H1 (cell line): ENCODE measurements at regions of chr2 and their contacts with region 1.

Region 1: DNA sequence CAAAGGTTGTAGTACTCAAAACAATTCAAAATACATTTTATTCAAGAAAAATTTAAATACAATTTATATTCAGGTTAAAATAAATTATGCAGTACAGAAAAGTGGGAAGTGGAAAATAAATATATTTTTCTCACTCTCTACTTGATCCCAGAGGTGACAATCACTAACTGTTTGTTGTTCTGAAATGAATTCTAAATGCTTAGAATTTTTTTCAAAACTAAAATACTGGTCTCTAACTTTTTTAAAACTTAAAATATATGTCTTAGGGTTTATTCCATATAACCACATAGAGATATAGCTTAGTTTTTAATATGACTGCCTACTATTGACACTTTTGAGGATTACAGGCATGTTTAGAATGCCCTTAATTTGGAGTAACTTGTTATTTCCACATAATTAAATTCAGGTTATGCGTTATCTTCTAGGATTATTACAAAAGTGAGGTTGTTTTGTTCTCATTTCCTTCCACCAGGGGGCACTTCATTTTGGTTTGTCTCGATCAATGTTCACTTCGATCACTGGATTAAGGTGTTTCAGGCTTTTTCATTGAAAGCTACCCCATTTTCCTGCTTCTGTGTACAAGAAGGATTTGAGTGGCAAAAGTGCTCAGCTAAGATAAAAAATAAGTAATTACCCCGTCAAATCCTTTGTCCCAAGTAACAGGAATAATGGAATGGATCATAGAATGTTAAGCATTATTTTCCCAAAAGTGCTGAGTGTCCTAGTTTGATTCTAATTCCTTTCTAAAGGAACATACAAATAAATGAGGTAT is 27.1 kb upstream of the TFPI start:
- DNase-seq: no peak
- H3K4me3 ChIP-seq: no peak overlapping the region
- H3K27ac ChIP-seq: no peak overlapping the region
- H3K4me1 ChIP-seq: no peaks in the 10 kb centered on the region
- H3K27me3 ChIP-seq: no peaks in the 10 kb centered on the region
- CTCF ChIP-seq: peak in 2 of 3 experiments; percentile 54 to 64; a peak in 2 of 4 replicates
- EP300 ChIP-seq: no peak
- POLR2A ChIP-seq: no peak
- RAD21 ChIP-seq: peak; percentile 61 to 70

Region 2: DNA sequence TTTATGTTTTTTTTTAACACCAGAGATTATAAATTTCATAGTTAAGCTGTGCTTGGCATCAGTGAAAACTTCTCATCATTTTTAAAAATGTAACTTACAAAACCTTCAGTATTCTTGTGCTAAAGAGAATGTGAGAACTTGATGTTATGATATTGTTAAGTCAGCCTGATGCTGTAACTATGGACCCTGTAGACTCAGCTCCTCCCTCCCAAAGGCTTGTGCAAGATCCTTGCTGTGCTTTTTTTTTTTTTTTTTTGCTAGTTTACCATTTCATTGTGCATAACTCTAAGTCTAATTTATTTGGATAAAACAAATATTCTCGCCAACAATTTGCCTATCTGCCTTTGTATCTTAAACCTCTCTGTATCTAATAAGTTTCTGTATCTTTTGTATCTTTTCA is 14.2 kb before region 1 on chr2:
- CTCF ChIA-PET with region 1: interaction called, 36 read pairs
- POLR2A ChIA-PET with region 1: no interaction called
- DNase-seq: no peak
- H3K4me3 ChIP-seq: no peak overlapping the region
- H3K27ac ChIP-seq: no peak overlapping the region
- H3K4me1 ChIP-seq: peaks cover 0 to 7% (median 0%) of the 10 kb centered on the region in 4 experiments; a peak in 2 of 7 replicates
- H3K27me3 ChIP-seq: no peaks in the 10 kb centered on the region
- CTCF ChIP-seq: no peak
- EP300 ChIP-seq: no peak
- POLR2A ChIP-seq: no peak
- RAD21 ChIP-seq: no peak

Region 3: DNA sequence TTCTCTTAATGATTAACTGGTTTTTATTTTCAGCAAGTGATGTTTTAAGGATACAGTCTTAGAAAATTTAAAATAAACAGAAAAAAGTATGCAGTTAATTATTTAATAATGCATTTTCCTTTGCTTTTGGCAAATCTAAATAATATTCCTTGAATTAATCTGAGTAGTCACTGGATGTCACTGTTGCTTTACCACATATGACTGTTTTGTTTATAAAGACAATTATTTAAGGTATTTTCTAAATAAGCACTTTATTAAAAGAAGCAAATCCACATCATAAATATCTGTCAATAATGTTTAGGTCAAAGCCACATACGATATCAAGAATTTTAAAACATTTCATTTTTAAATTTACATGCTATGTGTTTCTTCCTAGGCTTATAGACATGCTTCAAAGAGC is 13.5 kb after region 1 on chr2:
- CTCF ChIA-PET with region 1: interaction called, 26 read pairs
- POLR2A ChIA-PET with region 1: interaction called, 4 read pairs
- DNase-seq: no peak
- H3K4me3 ChIP-seq: no peak overlapping the region
- H3K27ac ChIP-seq: no peak overlapping the region
- H3K4me1 ChIP-seq: no peaks in the 10 kb centered on the region
- H3K27me3 ChIP-seq: no peaks in the 10 kb centered on the region
- CTCF ChIP-seq: no peak
- EP300 ChIP-seq: no peak
- POLR2A ChIP-seq: no peak
- RAD21 ChIP-seq: peak in 1 of 2 experiments; percentile 31; a peak in 3 of 4 replicates

Region 4: GRCh38 chr2:187644981-187645380 is 63.7 kb after region 1 on chr2:
- CTCF ChIA-PET with region 1: no interaction called
- POLR2A ChIA-PET with region 1: no interaction called
- DNase-seq: no peak
- H3K4me3 ChIP-seq: no peak overlapping the region
- H3K27ac ChIP-seq: no peak overlapping the region
- H3K4me1 ChIP-seq: no peaks in the 10 kb centered on the region
- H3K27me3 ChIP-seq: no peaks in the 10 kb centered on the region
- CTCF ChIP-seq: no peak
- EP300 ChIP-seq: no peak
- POLR2A ChIP-seq: no peak
- RAD21 ChIP-seq: no peak

Region 5: DNA sequence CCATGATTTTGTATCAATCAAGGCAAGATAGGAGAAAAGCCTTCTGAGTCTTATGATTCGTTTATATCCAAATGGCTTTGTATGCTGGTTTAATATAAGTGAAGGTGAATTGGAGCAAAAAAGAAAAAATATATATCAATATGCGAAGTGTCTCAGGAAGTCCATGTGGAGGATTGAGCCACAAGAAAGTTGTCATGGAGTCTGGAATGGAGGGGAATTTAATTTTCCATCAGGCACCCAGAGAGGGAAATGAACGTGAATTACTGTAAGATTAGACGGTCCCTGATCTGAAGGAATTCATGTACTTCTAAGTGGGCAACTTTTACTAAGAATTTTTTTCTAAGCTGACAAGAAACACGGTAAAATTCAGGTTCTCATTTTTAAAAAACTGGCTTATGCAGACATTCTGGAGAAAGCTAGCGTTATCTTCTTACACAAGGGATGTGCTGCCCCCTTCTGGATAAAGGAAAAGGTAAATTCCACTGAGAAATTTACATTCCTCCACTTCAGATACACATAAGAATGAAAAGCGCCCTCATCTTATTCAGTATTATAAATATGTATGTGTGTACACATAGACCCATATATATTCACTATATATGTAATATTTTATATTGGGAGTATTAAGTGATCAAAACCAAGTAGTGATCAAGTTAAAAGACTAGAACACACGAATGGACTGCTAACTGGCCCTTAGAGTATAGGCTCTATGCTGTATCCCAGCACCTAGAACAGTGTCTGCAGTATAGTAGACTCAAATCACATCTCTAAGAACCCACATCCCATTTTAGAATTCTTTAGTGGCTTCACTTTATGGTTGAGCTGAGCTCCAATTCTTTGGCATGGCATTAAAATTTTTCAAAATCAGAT is 261.9 kb after region 1 on chr2:
- CTCF ChIA-PET with region 1: interaction called, 57 read pairs
- POLR2A ChIA-PET with region 1: no interaction called
- DNase-seq: no peak
- H3K4me3 ChIP-seq: no peak overlapping the region
- H3K27ac ChIP-seq: no peak overlapping the region
- H3K4me1 ChIP-seq: no peaks in the 10 kb centered on the region
- H3K27me3 ChIP-seq: peaks cover 0 to 1% (median 0%) of the 10 kb centered on the region in 4 experiments; a peak in 1 of 7 replicates
- CTCF ChIP-seq: peak in 2 of 3 experiments; percentile 58 to 64; a peak in 3 of 4 replicates
- EP300 ChIP-seq: no peak
- POLR2A ChIP-seq: no peak
- RAD21 ChIP-seq: peak; percentile 85 to 87